ENCODE measurements at regions of chr16 and their contacts with region 1.

Region 1: GRCh38 chr16:54312502-54312991 is 26.0 kb upstream of the IRX3 start:
- DNase-seq: no peak
- ATAC-seq: no peak
- H3K4me3 ChIP-seq: no peak overlapping the region
- H3K27ac ChIP-seq: no peak overlapping the region
- H3K4me1 ChIP-seq: no peaks in the 10 kb centered on the region
- H3K27me3 ChIP-seq: no peaks in the 10 kb centered on the region
- CTCF ChIP-seq: no peak

Region 2: DNA sequence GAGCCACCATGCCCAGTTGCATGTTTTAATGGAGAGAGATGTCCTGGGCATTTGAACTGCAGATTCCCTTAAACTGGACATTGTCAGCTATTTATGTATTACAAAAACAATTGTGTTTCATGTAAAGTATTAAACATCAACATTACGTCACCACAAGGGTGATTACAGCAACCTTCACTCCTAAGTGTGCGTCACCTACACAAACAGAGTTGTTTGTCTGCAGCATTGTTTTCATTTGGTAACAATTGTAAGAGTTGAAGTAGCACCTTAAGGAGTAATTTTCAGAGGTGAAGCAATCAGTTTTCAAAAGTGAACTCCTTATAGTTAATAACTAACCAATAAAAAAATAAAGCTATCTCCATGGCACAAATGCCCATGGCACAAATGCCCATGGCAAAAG is 297.4 kb before region 1 on chr16:
- CTCF ChIA-PET with region 1: no interaction called
- POLR2A ChIA-PET with region 1: interaction called, 14 read pairs
- in situ Hi-C with region 1: no loop called
- intact Hi-C with region 1: no loop called
- DNase-seq: no peak
- ATAC-seq: no peak
- H3K4me3 ChIP-seq: no peak overlapping the region
- H3K27ac ChIP-seq: no peak overlapping the region
- H3K4me1 ChIP-seq: no peaks in the 10 kb centered on the region
- H3K27me3 ChIP-seq: no peaks in the 10 kb centered on the region
- CTCF ChIP-seq: no peak

Region 3: GRCh38 chr16:54128629-54129234 is 183.8 kb before region 1 on chr16:
- CTCF ChIA-PET with region 1: no interaction called
- POLR2A ChIA-PET with region 1: no interaction called
- in situ Hi-C with region 1: no loop called
- intact Hi-C with region 1: no loop called
- DNase-seq: no peak
- ATAC-seq: no peak
- H3K4me3 ChIP-seq: no peak overlapping the region
- H3K27ac ChIP-seq: no peak overlapping the region
- H3K4me1 ChIP-seq: no peaks in the 10 kb centered on the region
- H3K27me3 ChIP-seq: no peaks in the 10 kb centered on the region
- CTCF ChIP-seq: no peak

Measured in Panc1 (cell line).